Activated T-helper 2 cell treated with anti-CD3 and anti-CD28 coated beads, Interferon-gamma antibody, Interleukin-2, Interleukin-4, amounts not matched to agents 10 μg/mL and 5 μg/mL and 100 μg/mL, durations not matched to agents 14 hours and 24 hours and 36 hours (primary cell): ENCODE measurements at regions of chr6 and their contacts with region 1.

Region 1: GRCh38 chr6:109009236-109009961 is 85.2 kb downstream of the SESN1 start:
- DNase-seq: peak; percentile 84
- H3K4me3 Mint-ChIP-seq: peak overlapping the region; percentile 89
- H3K27ac Mint-ChIP-seq: peak overlapping the region; percentile 84
- H3K4me1 Mint-ChIP-seq: peaks cover 54% of the 10 kb centered on the region
- H3K27me3 Mint-ChIP-seq: no peaks in the 10 kb centered on the region

Region 2: GRCh38 chr6:108848116-108848868 is 161.1 kb before region 1 on chr6 and contains the start of gene ARMC2:
- intact Hi-C with region 1: loop called (anchors 1 kb)
- DNase-seq: peak; percentile 85
- H3K4me3 Mint-ChIP-seq: peak within 1 kb of the TSS; percentile 81
- H3K27ac Mint-ChIP-seq: peak within 1 kb of the TSS; percentile 42
- H3K4me1 Mint-ChIP-seq: peaks cover 22% of the 10 kb centered on the region
- H3K27me3 Mint-ChIP-seq: peaks cover 28% of the 10 kb centered on the region
- total RNA-seq, gene ARMC2: 1.9 and 2.7 TPM in 2 replicates

Region 3: DNA sequence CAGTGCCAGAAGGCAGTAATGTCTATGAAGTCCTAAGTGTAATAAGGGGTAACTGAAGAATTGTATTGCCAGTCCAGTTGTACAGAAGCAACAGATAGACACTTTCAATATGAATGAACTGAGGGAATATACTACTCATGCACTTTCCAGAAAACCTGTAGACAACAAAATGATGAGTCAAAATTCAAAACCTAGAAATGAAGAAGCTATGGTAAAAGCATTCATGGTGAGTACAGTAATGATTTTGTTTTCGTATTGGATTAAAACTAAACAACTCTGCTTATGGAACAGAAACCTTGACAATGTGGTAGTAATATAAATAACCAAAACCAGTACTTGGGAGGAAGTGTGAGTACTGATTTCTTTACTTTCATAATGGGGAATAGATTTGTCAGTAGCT is 126.2 kb before region 1 on chr6:
- intact Hi-C with region 1: loop called (anchors 2 kb)
- DNase-seq: no peak
- H3K4me3 Mint-ChIP-seq: no peak overlapping the region
- H3K27ac Mint-ChIP-seq: peak overlapping the region; percentile 84
- H3K4me1 Mint-ChIP-seq: peaks cover 37% of the 10 kb centered on the region
- H3K27me3 Mint-ChIP-seq: peaks cover 19% of the 10 kb centered on the region

Region 4: DNA sequence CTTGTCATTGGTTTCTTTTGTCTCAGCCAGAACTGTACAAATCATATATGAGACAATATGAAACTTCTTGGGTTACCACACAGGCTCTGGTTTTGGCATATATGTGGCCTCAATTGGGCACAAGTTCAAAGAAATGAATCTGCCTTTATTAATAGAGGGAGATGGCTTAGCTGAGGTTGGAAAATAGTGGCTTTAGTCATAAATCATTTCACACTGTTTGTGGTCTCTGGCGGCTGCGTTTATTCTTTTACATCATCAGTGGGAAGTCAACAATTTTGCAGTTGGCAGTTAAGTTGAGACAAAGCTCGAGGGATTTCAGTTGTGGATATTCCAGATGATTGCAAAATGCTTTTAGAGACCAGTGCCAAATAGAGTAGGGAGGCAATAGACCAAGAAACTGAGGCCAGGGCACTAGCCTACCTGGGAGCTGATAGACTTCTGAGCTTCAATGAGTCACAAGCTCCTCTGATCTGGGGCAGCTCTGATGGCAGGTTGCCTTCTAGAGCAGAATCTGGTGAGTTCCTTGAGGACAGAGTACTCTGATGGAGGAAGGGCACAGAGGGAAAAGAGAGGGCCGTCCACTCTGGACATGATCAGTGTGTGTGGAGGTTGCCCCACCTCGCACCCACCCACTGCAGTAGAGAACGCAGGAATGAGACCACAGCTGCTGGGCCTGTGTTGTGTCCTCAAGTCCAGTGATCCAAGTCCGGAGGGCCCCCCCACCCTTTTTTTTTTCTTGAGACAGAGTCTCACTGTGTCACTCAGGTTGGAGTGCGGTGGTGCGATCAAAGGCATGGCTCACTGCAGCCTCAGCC is 87.6 kb before region 1 on chr6:
- intact Hi-C with region 1: loop called (anchors 1 kb)
- DNase-seq: no peak
- H3K4me3 Mint-ChIP-seq: no peak overlapping the region
- H3K27ac Mint-ChIP-seq: peak overlapping the region; percentile 4
- H3K4me1 Mint-ChIP-seq: peaks cover 37% of the 10 kb centered on the region
- H3K27me3 Mint-ChIP-seq: peaks cover 65% of the 10 kb centered on the region

Region 5: DNA sequence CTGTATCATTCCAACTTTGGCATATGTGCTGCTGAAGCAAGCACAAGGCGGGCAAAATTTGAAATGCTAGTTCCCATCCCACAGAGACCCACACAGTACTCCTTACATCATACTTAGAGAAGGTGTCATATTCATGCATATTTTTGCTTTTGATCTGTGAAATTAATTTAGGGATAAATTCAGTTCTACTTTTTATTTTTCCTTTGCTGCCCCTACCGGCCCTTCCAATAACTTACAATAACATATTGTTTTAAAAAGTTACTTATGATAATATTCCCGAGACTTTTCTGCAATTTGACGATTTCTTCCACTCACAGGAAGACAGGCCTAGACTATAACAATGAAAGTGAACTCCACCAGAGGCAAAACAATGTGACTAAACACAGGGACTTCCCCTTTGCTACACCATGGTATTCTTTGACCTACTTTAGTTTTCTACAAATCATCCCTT is 50.2 kb after region 1 on chr6:
- intact Hi-C with region 1: loop called (anchors 5 kb)
- DNase-seq: no peak
- H3K4me3 Mint-ChIP-seq: no peak overlapping the region
- H3K27ac Mint-ChIP-seq: peak overlapping the region; percentile 24
- H3K4me1 Mint-ChIP-seq: peaks cover 25% of the 10 kb centered on the region
- H3K27me3 Mint-ChIP-seq: peaks cover 12% of the 10 kb centered on the region

Region 6: DNA sequence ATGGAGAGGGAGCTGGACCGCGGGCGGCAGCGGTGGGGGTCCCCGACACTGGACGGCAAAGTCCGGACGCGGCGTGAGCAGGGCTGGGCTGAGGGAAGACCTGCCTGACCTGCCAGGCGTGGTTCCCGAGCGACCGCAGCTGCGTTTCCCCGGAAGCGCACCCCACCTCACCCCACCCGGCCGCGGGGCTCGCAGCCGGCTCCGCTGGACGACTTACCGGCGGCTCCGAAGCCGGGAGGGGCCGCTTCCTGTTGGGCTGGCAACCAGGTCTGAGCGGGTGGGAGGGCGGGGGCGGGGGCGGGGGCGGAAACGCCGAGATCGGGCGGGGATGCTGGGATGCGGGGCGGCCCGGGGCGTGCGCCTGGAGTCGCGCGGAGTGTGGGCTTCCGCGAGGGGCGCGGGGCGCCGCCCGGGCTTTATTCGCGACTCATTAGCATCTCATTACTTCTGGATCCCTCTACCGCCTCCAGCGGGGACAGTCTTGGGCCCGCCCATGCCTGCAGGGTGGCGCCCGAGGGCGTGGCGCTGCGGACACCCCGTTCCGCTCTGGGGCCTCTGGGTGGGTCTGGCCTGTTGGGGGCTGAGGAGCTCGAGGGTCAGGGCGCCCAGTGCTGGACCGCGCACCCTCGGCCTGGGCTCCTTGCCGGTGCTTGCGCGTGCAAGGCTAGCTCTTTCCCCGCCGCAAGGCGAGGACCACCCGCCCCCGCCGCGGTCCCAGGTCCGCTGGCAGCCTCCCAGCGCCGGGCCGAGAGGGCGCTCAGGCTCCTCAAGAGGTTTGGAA is 446.3 kb after region 1 on chr6 and contains the start of gene MICAL1:
- intact Hi-C with region 1: loop called (anchors 5 kb)
- DNase-seq: peak; percentile 78
- H3K4me3 Mint-ChIP-seq: peak within 1 kb of the TSS; percentile 97
- H3K27ac Mint-ChIP-seq: peak within 1 kb of the TSS; percentile 94
- H3K4me1 Mint-ChIP-seq: peaks cover 60% of the 10 kb centered on the region
- H3K27me3 Mint-ChIP-seq: no peaks in the 10 kb centered on the region
- total RNA-seq, gene MICAL1: 47.8 and 51.8 TPM in 2 replicates